Activated CD4-positive, alpha-beta T cell treated with anti-CD3 and anti-CD28 coated beads for 36 hours (primary cell): ENCODE measurements at regions of chr5 and their contacts with region 1.

Region 1: GRCh38 chr5:126988021-126988569 is 42.3 kb downstream of the MARCHF3 start:
- DNase-seq: peak; percentile 56
- ATAC-seq: peak; percentile 95
- H3K4me3 Mint-ChIP-seq: peak overlapping the region; percentile 37
- H3K27ac Mint-ChIP-seq: peak overlapping the region; percentile 92
- H3K4me1 Mint-ChIP-seq: peaks cover 38% of the 10 kb centered on the region
- H3K27me3 Mint-ChIP-seq: no peaks in the 10 kb centered on the region

Region 2: DNA sequence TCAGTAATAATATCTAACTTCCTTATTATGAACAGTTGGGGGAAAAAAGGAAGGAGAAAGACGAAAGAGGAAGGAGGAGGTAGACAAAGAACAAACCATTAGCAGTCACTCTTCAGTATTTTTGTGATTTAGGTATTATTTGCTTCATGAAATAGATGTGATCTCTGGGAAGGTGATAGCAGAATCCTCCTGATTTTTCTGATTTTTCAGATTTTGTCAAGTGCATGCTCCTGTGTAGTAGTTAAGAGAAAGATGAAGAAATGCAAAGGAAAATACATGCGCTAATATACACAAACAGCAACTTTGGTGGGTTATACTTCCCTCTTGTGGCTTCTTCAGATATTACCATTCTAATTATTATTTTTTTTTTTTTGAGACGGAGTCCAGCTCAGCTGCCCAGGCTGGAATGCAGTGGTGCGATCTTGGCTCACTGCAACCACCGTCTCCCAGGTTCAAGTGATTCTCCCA is 179.5 kb before region 1 on chr5:
- CTCF ChIA-PET with region 1: no interaction called
- POLR2A ChIA-PET with region 1: no interaction called
- intact Hi-C with region 1: loop called in 1 of 2 experiments (anchors 1 kb)
- DNase-seq: no peak
- ATAC-seq: no peak
- H3K4me3 Mint-ChIP-seq: no peak overlapping the region
- H3K27ac Mint-ChIP-seq: no peak overlapping the region
- H3K4me1 Mint-ChIP-seq: peaks cover 51% of the 10 kb centered on the region
- H3K27me3 Mint-ChIP-seq: no peaks in the 10 kb centered on the region

Region 3: GRCh38 chr5:126917918-126918614 is 70.0 kb before region 1 on chr5:
- CTCF ChIA-PET with region 1: no interaction called
- POLR2A ChIA-PET with region 1: no interaction called
- intact Hi-C with region 1: no loop called
- DNase-seq: no peak
- ATAC-seq: no peak
- H3K4me3 Mint-ChIP-seq: no peak overlapping the region
- H3K27ac Mint-ChIP-seq: no peak overlapping the region
- H3K4me1 Mint-ChIP-seq: peaks cover 3% of the 10 kb centered on the region
- H3K27me3 Mint-ChIP-seq: no peaks in the 10 kb centered on the region

Region 4: DNA sequence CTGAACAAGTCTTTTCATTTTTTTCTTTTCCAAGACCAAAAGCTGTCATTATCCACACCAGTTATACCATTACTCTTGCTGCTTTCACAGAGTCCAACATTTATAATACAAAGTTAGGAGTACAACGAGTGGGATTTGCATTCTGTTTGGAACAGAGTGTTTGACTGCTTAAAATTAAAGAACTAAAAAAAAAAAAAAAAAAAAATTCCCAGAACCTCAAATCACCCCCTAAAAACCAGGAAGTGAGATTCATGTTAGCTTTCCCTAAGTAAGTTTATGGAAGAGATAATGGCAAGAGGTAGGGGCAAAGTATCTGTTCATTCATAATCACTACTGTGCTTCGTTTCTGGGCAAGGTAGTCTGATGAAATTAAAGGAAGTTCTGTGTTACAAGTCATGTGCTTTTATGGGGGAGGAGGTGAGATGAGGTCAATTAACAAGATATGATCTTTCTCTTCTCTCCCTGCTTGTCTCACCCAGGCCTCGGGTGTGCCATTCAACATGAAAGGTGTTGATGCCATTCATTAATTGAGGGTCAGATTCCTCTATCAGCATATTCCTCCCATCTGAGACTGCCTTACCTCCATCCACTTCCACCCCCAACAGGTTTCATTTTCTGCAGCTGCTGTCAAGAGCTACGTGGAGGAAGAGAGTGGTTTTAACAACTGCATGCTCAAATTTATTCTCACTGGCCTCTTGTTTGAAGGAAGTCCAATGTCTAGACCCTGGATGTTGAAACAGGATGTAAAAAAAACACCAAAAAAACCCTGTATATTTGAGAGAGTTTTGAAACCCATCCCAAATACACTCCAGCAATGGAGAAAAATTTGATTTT is 15.8 kb before region 1 on chr5:
- CTCF ChIA-PET with region 1: no interaction called
- POLR2A ChIA-PET with region 1: no interaction called
- intact Hi-C with region 1: loop called in 1 of 2 experiments (anchors 1 kb)
- DNase-seq: peak; percentile 40
- ATAC-seq: peak; percentile 85
- H3K4me3 Mint-ChIP-seq: peak overlapping the region; percentile 46
- H3K27ac Mint-ChIP-seq: peak overlapping the region; percentile 94
- H3K4me1 Mint-ChIP-seq: peaks cover 28% of the 10 kb centered on the region
- H3K27me3 Mint-ChIP-seq: no peaks in the 10 kb centered on the region

Region 5: GRCh38 chr5:127011961-127012644 is 24.0 kb after region 1 on chr5:
- CTCF ChIA-PET with region 1: interaction called, 3 read pairs
- POLR2A ChIA-PET with region 1: no interaction called
- intact Hi-C with region 1: loop called (anchors 2 kb)
- DNase-seq: no peak
- ATAC-seq: peak; percentile 88
- H3K4me3 Mint-ChIP-seq: no peak overlapping the region
- H3K27ac Mint-ChIP-seq: no peak overlapping the region
- H3K4me1 Mint-ChIP-seq: peaks cover 44% of the 10 kb centered on the region
- H3K27me3 Mint-ChIP-seq: no peaks in the 10 kb centered on the region

Region 6: DNA sequence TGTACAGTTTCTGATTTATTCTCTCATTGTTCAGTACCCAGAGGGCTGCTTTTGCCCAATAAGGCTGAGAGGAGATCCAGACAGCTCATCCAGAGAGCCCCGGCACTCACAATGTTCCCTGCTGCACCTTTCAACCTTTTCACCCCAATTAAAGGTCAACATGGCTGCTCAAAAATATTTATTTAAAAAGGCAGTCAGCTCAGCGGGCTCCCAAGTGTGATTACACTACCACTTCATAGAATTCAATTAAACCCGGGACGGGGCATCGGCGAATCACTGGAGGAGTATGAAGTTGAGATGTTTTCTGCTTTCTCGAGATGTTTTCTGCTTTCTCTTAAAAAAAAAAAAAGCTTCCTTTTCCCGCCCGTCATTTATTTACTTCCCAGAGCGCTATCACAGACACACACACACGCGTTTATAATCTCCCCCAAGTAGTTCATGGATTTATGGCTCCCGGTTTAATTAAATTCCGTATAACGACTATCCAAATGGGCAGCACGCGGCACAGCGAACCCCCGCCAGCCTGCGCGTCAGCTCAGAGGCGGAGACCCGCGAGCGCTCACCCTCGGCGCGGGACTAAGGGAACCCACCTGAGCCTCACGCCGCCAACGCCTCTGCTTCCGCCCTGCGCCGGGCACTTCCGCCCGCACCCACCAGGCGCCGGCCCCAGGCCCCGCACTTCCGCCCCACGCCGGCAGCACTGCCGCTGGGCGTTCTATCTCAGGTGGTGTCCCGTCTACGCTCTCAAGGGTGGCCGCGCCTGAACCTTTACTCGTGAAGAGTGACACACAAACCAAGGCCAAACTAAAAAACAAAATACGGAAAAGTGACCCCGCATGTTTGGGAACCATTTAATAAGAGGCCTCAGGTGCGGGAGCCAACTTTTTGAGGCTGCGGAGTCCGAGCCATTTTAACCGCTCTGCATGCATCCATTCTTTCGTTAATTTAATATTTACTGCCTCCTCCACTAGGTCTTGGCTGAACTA is 85.1 kb after region 1 on chr5 and contains the start of gene C5orf63:
- CTCF ChIA-PET with region 1: interaction called, 3 read pairs
- POLR2A ChIA-PET with region 1: no interaction called
- intact Hi-C with region 1: loop called in 1 of 2 experiments (anchors 2 kb)
- DNase-seq: peak; percentile 87
- ATAC-seq: peak; percentile 98
- H3K4me3 Mint-ChIP-seq: peak within 1 kb of the TSS; percentile 86
- H3K27ac Mint-ChIP-seq: peak within 1 kb of the TSS; percentile 97
- H3K4me1 Mint-ChIP-seq: peaks cover 9% of the 10 kb centered on the region
- H3K27me3 Mint-ChIP-seq: no peaks in the 10 kb centered on the region
- total RNA-seq, gene C5orf63: 12.0 to 14.2 TPM